OCI-LY7 (cell line): ENCODE measurements at regions of chr1 and their contacts with region 1.

Region 1: GRCh38 chr1:207499573-207499972 is 3.6 kb downstream of the CR1 start:
- DNase-seq: peak; percentile 77
- H3K4me3 ChIP-seq: no peak overlapping the region
- H3K27ac ChIP-seq: no peak overlapping the region
- H3K4me1 ChIP-seq: peaks cover 10% of the 10 kb centered on the region
- CTCF ChIP-seq: peak; percentile 94

Region 2: DNA sequence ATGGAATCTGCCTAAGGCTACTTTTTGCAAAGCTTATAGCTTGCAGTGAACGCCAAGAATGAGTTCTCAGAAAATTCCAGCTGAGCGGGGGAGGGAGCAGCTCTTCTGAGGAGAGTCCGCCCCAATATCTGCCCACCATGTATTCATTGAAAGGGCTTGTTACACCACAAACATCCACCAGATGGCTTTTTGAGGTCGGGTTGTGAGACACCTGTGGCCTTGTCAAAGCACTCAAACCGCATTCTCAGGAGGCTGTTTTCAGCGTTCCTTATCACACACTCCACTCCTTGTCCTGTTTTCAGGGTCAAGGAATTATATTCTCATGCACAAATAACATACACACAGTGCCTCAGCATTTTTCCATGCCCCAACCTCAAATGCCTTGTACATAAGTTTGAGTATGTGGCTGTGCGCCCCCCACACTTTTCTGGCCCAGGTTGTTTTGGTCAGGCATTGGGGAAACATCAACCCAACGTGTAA is 414.8 kb before region 1 on chr1:
- CTCF ChIA-PET with region 1: no interaction called
- POLR2A ChIA-PET with region 1: no interaction called
- intact Hi-C with region 1: loop called (anchors 1 kb)
- DNase-seq: peak; percentile 60
- H3K4me3 ChIP-seq: no peak overlapping the region
- H3K27ac ChIP-seq: no peak overlapping the region
- H3K4me1 ChIP-seq: no peaks in the 10 kb centered on the region
- CTCF ChIP-seq: peak; percentile 77

Region 3: GRCh38 chr1:207181838-207182237 is 317.7 kb before region 1 on chr1:
- CTCF ChIA-PET with region 1: no interaction called
- POLR2A ChIA-PET with region 1: no interaction called
- intact Hi-C with region 1: loop called (anchors 5 kb)
- DNase-seq: no peak
- H3K4me3 ChIP-seq: no peak overlapping the region
- H3K27ac ChIP-seq: no peak overlapping the region
- H3K4me1 ChIP-seq: no peaks in the 10 kb centered on the region
- CTCF ChIP-seq: peak; percentile 56

Region 4: GRCh38 chr1:207321079-207321789 is 178.3 kb before region 1 on chr1 and contains the start of gene CD55:
- CTCF ChIA-PET with region 1: no interaction called
- POLR2A ChIA-PET with region 1: interaction called, 3 read pairs
- intact Hi-C with region 1: loop called (anchors 5 kb)
- DNase-seq: peak; percentile 96
- H3K4me3 ChIP-seq: peak within 1 kb of the TSS; percentile 87
- H3K27ac ChIP-seq: peak within 1 kb of the TSS; percentile 73
- H3K4me1 ChIP-seq: peaks cover 20% of the 10 kb centered on the region
- CTCF ChIP-seq: peak; percentile 67; the same call in 1 of the 2 replicates
- total RNA-seq, gene CD55: 18.8 and 28.1 TPM in 2 replicates

Region 5: DNA sequence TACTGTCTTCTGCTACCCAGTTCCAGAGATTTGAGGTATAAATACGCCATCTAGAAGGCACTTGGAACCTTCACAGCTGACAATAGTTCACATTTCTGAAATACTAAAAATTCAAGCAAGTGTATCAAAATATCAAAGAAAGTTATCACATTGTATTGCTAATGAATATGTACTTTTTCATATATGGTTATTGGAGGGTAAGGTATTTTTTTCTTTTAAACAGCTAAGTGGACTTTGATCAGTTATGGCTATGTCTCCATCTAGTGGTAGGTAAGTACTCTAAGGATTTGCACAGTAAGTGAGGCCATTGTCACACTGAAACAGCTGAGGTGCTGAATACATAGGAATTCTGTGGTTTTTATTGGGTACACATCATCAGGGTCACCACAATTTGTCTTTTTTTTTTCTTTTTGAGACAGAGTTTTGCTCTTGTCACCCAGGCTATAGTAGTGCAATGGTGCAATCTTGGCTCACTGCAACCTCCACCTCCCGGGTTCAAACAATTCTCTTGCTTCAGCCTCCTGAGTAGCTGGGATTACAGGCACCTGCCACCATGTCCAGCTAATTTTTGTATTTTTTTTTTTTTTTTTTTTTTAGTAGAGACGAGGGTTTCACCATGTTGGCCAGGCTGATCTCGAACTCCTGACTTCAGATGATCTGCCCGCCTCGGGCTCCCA is 94.6 kb before region 1 on chr1:
- CTCF ChIA-PET with region 1: no interaction called
- POLR2A ChIA-PET with region 1: no interaction called
- intact Hi-C with region 1: loop called (anchors 1 kb)
- DNase-seq: peak; percentile 78
- H3K4me3 ChIP-seq: no peak overlapping the region
- H3K27ac ChIP-seq: no peak overlapping the region
- H3K4me1 ChIP-seq: no peaks in the 10 kb centered on the region
- CTCF ChIP-seq: peak; percentile 92

Region 6: GRCh38 chr1:207454046-207454964 is 45.3 kb before region 1 on chr1 and contains the start of gene CR2:
- CTCF ChIA-PET with region 1: no interaction called
- POLR2A ChIA-PET with region 1: interaction called, 3 read pairs
- intact Hi-C with region 1: loop called (anchors 1 kb)
- DNase-seq: peak; percentile 86
- H3K4me3 ChIP-seq: peak within 1 kb of the TSS; percentile 70
- H3K27ac ChIP-seq: no peak within 1 kb of the TSS
- H3K4me1 ChIP-seq: peaks cover 36% of the 10 kb centered on the region
- CTCF ChIP-seq: peak; percentile 76
- total RNA-seq, gene CR2: 3.7 and 4.4 TPM in 2 replicates